ENCODE measurements at regions of chr1 and their contacts with region 1.

Region 1: GRCh38 chr1:98794196-98794886 is 132.8 kb downstream of the SNX7 start:
- DNase-seq: peak; percentile 64
- ATAC-seq: peak; percentile 95
- H3K4me3 Mint-ChIP-seq: no peak overlapping the region
- H3K27ac Mint-ChIP-seq: no peak overlapping the region
- H3K4me1 Mint-ChIP-seq: peaks cover 23% of the 10 kb centered on the region
- H3K27me3 Mint-ChIP-seq: no peaks in the 10 kb centered on the region
- CTCF ChIP-seq: peak; percentile 74

Region 2: DNA sequence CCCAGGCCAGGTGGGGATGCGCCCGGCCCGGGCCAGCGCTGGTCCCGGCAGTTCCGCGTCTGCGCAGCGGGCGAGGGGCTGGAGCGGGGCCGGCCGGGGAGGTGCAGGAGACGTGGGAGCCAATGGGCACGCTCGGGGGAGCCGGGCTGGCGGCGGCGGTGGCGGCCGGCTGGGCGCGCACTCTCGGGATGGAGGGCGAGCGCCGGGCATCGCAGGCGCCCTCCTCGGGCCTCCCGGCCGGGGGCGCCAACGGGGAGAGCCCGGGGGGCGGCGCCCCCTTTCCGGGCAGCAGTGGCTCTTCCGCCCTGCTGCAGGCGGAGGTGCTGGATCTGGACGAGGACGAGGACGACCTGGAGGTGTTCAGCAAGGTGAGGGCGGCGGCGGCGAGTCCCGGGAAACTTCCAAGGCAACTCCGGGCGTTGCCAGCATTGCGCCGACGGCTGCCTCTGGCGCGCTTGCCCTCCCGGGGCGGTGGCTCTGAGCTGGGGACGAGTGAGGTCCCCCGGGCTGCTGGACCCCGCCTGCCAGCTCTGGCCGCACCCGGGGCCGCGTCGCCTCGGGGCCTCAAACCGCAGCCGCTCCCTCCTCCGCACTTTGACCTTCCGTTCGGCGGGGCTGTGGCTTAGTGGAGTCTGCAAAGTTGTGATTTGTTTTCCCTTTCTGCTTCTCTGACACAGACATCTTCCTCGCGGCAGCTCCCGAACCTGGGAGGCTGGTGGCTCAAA is 132.6 kb before region 1 on chr1 and contains the start of gene SNX7:
- CTCF ChIA-PET with region 1: no interaction called
- POLR2A ChIA-PET with region 1: no interaction called
- intact Hi-C with region 1: no loop called
- DNase-seq: peak; percentile 10
- ATAC-seq: peak; percentile 30
- H3K4me3 Mint-ChIP-seq: peak within 1 kb of the TSS; percentile 62
- H3K27ac Mint-ChIP-seq: no peak within 1 kb of the TSS
- H3K4me1 Mint-ChIP-seq: peaks cover 14% of the 10 kb centered on the region
- H3K27me3 Mint-ChIP-seq: peaks cover 33% of the 10 kb centered on the region
- CTCF ChIP-seq: no peak
- total RNA-seq, gene SNX7: not detected

Region 3: DNA sequence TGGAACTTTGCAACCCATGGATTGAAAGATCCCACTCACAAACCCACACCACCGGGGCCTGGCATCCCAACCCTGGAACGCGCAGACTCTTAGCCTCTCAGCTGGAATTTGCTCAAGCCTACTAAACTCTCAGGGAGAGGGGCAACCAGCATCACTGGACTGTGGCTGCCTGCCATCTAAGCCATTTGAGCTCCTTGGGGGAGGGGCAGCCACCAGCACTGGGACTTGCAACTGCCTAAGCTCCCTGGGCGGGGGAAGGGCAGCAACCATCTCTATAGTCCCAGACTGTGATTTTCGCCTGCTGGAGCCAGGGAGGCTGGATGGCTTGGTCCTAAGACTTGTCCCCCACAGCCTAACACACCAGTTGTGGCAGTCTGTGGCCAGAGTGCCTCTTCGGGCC is 10.5 kb before region 1 on chr1:
- CTCF ChIA-PET with region 1: interaction called, 11 read pairs
- POLR2A ChIA-PET with region 1: no interaction called
- intact Hi-C with region 1: no loop called
- DNase-seq: no peak
- ATAC-seq: no peak
- H3K4me3 Mint-ChIP-seq: no peak overlapping the region
- H3K27ac Mint-ChIP-seq: no peak overlapping the region
- H3K4me1 Mint-ChIP-seq: no peaks in the 10 kb centered on the region
- H3K27me3 Mint-ChIP-seq: peaks cover 6% of the 10 kb centered on the region
- CTCF ChIP-seq: no peak

Region 4: GRCh38 chr1:98963064-98963787 is 168.9 kb after region 1 on chr1:
- CTCF ChIA-PET with region 1: no interaction called
- POLR2A ChIA-PET with region 1: no interaction called
- intact Hi-C with region 1: loop called (anchors 10 kb)
- DNase-seq: no peak
- ATAC-seq: no peak
- H3K4me3 Mint-ChIP-seq: no peak overlapping the region
- H3K27ac Mint-ChIP-seq: no peak overlapping the region
- H3K4me1 Mint-ChIP-seq: peaks cover 8% of the 10 kb centered on the region
- H3K27me3 Mint-ChIP-seq: peaks cover 9% of the 10 kb centered on the region
- CTCF ChIP-seq: no peak

Region 5: DNA sequence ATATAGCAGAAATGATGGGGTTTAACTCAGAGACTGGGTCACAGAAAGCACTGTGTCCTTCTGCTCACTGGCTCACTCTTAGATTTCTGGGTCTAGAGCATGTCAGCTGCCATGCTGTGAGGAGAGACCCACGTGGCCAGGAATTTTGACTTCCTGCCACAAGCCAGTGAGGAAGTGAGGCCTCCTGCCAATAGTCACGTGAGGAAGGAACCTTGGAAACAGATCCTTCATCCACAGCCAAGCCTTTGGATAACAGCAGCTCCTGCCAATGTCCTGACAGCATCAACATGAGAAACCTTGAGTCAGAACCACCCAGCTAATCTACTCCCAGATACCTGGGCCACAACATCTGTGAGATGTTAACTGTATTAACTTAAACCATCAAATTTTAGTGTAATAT is 324.8 kb after region 1 on chr1:
- CTCF ChIA-PET with region 1: no interaction called
- POLR2A ChIA-PET with region 1: no interaction called
- intact Hi-C with region 1: loop called (anchors 10 kb)
- DNase-seq: no peak
- ATAC-seq: no peak
- H3K4me3 Mint-ChIP-seq: no peak overlapping the region
- H3K27ac Mint-ChIP-seq: no peak overlapping the region
- H3K4me1 Mint-ChIP-seq: no peaks in the 10 kb centered on the region
- H3K27me3 Mint-ChIP-seq: no peaks in the 10 kb centered on the region
- CTCF ChIP-seq: no peak

Region 6: GRCh38 chr1:99180343-99180808 is 386.0 kb after region 1 on chr1:
- CTCF ChIA-PET with region 1: interaction called, 12 read pairs
- POLR2A ChIA-PET with region 1: no interaction called
- intact Hi-C with region 1: no loop called
- DNase-seq: peak; percentile 83
- ATAC-seq: peak; percentile 93
- H3K4me3 Mint-ChIP-seq: no peak overlapping the region
- H3K27ac Mint-ChIP-seq: no peak overlapping the region
- H3K4me1 Mint-ChIP-seq: no peaks in the 10 kb centered on the region
- H3K27me3 Mint-ChIP-seq: no peaks in the 10 kb centered on the region
- CTCF ChIP-seq: peak; percentile 79

Region 7: DNA sequence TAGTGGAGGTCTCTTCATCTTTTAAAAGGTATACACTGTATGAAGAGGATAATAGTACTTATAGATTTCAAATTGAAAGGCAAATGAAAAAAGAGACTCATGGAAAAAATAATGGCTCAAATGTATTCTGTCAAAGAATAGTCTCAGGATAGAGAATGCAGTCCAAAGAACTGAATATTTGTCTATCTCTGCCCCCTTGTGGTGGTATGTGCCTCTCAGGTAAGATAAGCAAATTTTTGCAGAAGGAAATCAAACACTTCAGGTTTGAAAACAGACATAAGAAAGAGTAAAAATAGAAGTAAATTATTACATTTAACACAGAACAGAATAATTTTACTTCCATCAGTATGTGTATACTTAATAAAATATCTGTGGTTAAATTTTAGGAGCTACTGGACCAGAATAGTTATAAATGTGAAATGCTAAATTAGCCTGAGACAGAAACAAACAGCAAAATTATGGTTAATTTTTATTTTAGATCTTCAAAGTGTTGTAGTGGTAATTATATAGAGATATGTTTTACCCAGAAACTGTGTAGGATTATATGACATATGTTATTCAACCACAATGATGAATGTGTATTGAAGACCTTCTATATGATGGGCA is 687.2 kb after region 1 on chr1:
- CTCF ChIA-PET with region 1: interaction called, 6 read pairs
- POLR2A ChIA-PET with region 1: no interaction called
- intact Hi-C with region 1: loop called (anchors 10 kb)
- DNase-seq: peak; percentile 57
- ATAC-seq: peak; percentile 60
- H3K4me3 Mint-ChIP-seq: no peak overlapping the region
- H3K27ac Mint-ChIP-seq: no peak overlapping the region
- H3K4me1 Mint-ChIP-seq: no peaks in the 10 kb centered on the region
- H3K27me3 Mint-ChIP-seq: peaks cover 15% of the 10 kb centered on the region
- CTCF ChIP-seq: peak; percentile 87

Measured in activated CD8-positive, alpha-beta T cell treated with anti-CD3 and anti-CD28 coated beads for 36 hours (primary cell).